Endothelial cell of umbilical vein (primary cell): ENCODE measurements at regions of chr20 and their contacts with region 1.

Region 1: DNA sequence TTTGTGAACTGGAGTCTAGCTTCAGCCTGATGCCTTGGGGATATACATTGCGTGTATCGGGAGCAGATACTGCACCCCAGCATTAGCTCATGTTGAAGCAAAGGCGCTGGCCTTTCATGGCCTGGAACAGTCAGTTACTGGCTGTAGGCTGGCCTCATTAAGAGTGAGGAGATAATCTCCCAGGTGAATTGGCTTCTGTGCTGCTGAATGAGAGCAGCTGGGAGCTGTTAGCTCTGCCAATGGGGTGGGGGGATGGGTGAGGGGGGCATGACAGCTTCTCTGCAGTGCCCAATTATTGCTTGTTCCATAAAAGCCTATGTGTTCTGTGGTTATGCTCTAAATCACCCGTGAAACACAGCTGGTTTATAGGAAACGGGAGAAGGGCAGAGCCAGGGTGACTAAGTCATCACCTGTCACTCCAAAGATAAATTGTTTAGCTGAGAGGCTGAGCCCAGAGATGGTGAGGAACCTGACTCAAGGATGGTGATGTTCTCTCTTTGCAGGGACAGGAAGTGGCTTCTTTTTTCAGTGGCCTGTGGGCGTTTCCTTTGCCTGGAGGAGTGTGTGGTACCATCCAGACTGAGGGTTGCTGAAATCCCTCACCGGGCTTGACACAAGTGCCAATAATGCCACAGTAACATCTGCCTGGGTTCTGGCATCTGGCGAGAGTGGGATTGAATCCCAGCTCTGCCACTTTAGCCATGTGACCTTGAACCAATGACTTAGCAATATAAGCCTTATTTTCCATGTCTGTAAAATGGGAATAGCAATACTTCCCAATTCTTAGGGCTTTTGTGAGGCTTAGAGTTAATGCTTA is 170.8 kb downstream of the BCAS1 start:
- DNase-seq: peak; percentile 47
- H3K4me3 ChIP-seq: no peak overlapping the region
- H3K27ac ChIP-seq: peak overlapping the region; percentile 97
- H3K4me1 ChIP-seq: peaks cover 50% of the 10 kb centered on the region
- H3K27me3 ChIP-seq: no peaks in the 10 kb centered on the region
- CTCF ChIP-seq: no peak
- POLR2A ChIP-seq: no peak

Region 2: DNA sequence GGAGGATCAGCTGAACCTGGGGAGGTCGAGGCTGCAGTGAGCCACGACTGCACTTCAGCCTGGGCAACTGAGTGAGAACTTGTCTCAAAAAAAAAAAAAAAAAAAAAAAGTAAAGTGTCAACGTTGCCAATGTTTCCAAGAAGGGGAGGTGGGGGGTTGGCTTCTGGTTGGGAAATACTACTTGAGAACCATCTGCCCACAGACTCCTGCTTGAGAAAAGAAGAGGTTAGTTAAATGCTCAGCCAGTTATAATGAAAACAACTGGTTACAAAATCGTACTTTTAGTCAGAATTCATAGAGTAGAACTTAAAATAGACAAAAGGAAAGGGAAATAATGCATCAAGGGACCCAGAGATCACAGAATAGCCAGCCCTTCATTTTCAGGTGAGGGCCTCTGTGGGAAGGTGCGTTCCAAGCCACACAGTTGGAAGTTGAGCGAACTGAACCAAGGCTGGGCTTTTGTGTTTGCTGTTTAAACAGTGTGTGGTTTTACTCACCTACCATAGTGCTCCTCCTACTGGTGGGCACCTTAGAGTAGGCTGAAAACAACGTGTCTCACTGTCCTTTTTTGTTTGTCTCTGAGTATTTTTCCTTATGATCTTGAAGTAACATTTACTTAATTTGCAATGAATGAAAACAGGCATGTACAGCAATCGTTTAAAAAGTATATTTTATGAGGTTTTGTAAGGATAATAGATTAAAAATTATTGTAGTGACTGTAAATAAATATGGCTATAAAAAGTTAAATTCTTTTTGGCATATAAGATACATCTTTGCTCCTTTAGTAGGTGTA is 29.9 kb before region 1 on chr20:
- CTCF ChIA-PET with region 1: interaction called, 8 read pairs
- POLR2A ChIA-PET with region 1: no interaction called
- dilution Hi-C with region 1: no loop called
- intact Hi-C with region 1: loop called (anchors 2 kb)
- DNase-seq: peak; percentile 82
- H3K4me3 ChIP-seq: no peak overlapping the region
- H3K27ac ChIP-seq: no peak overlapping the region
- H3K4me1 ChIP-seq: peaks cover 22% of the 10 kb centered on the region
- H3K27me3 ChIP-seq: no peaks in the 10 kb centered on the region
- CTCF ChIP-seq: peak; percentile 74 to 77
- POLR2A ChIP-seq: no peak

Region 3: DNA sequence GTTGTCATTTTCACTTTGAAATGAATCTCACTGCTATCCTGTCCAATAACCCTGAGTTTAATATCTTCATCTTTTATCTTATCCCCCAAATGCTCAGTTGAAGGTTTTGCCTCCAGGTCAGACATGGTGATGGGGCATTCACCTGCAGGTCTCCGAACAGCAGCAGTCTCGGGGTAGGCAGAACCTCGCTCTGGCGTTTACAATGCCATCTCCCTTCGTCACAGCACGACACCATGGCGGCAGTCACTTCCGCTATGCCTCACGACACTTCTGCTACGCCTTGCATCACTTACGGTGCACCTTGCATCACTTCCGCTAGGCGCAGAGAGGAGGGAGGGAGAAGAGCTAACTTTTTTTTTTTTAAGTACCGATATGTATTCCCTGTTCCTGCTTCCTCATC is 24.1 kb before region 1 on chr20:
- CTCF ChIA-PET with region 1: interaction called, 10 read pairs
- POLR2A ChIA-PET with region 1: no interaction called
- dilution Hi-C with region 1: no loop called
- intact Hi-C with region 1: loop called (anchors 2 kb)
- DNase-seq: no peak
- H3K4me3 ChIP-seq: no peak overlapping the region
- H3K27ac ChIP-seq: no peak overlapping the region
- H3K4me1 ChIP-seq: peaks cover 14% of the 10 kb centered on the region
- H3K27me3 ChIP-seq: no peaks in the 10 kb centered on the region
- CTCF ChIP-seq: no peak
- POLR2A ChIP-seq: no peak

Region 4: DNA sequence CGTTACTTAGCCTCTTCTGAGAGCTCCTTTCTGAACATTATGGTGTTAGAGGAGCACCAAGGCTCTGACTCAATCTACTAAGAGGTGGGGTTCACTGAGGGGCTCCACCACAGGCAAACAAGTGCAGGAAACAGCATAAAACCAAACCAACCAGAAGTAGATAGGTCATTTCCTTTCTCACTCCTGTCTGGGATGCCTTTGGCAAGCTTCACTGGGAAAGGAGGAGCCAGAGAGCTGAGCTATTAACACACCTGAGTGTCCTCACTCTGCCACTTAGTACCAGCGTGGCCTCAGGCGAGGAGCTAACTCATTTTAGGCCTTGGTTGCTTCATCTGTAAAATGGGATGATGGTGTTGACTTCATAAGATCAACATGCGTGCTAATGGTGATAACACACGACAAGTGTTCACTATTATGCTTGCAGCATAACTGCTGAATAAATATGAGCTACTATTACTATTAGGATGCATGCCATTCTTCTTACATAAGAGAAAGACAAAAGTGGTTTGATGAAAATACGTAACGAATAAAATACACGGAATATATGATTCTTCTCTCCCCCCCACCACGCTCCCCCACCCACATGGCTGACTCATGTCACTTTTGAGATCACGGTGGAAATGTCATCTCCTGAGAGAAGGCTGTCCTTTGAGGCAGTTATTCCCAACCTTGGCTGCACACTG is 14.6 kb before region 1 on chr20:
- CTCF ChIA-PET with region 1: interaction called, 10 read pairs
- POLR2A ChIA-PET with region 1: no interaction called
- dilution Hi-C with region 1: no loop called
- intact Hi-C with region 1: loop called (anchors 1 kb)
- DNase-seq: no peak
- H3K4me3 ChIP-seq: no peak overlapping the region
- H3K27ac ChIP-seq: no peak overlapping the region
- H3K4me1 ChIP-seq: peaks cover 8% of the 10 kb centered on the region
- H3K27me3 ChIP-seq: no peaks in the 10 kb centered on the region
- CTCF ChIP-seq: no peak
- POLR2A ChIP-seq: no peak

Region 5: GRCh38 chr20:53926428-53927028 is 27.0 kb after region 1 on chr20:
- CTCF ChIA-PET with region 1: interaction called, 3 read pairs
- POLR2A ChIA-PET with region 1: interaction called, 5 read pairs
- dilution Hi-C with region 1: no loop called
- intact Hi-C with region 1: loop called (anchors 1 kb)
- DNase-seq: peak; percentile 96
- H3K4me3 ChIP-seq: no peak overlapping the region
- H3K27ac ChIP-seq: peak overlapping the region; percentile 77
- H3K4me1 ChIP-seq: peaks cover 13% of the 10 kb centered on the region
- H3K27me3 ChIP-seq: no peaks in the 10 kb centered on the region
- CTCF ChIP-seq: no peak
- POLR2A ChIP-seq: peak; percentile 38

Region 6: GRCh38 chr20:53934421-53935343 is 35.1 kb after region 1 on chr20:
- CTCF ChIA-PET with region 1: interaction called, 35 read pairs
- POLR2A ChIA-PET with region 1: interaction called, 4 read pairs
- dilution Hi-C with region 1: no loop called
- intact Hi-C with region 1: no loop called
- DNase-seq: peak; percentile 93
- H3K4me3 ChIP-seq: no peak overlapping the region
- H3K27ac ChIP-seq: peak overlapping the region; percentile 78
- H3K4me1 ChIP-seq: peaks cover 25% of the 10 kb centered on the region
- H3K27me3 ChIP-seq: no peaks in the 10 kb centered on the region
- CTCF ChIP-seq: no peak
- POLR2A ChIP-seq: no peak

Region 7: DNA sequence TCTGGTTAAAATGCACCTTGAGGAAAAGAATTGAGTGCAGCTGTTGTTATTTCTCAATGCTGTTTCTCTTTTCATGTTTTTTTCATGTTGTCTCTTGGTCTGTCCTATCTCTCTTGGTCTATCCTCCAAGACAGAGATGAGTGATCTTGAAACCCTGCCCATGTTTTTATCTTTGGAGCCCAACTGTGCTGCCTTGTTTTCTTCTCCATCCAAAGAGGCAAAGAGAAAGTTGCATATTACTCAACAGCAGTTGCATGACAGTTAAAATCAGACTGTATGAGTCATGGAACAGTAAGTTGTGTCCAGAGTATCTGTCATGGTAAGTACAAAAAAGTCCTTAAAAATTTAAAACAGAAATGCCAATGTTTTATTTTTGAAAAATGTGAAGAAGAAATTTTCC is 144.6 kb after region 1 on chr20:
- CTCF ChIA-PET with region 1: no interaction called
- POLR2A ChIA-PET with region 1: no interaction called
- dilution Hi-C with region 1: no loop called
- intact Hi-C with region 1: no loop called
- DNase-seq: no peak
- H3K4me3 ChIP-seq: no peak overlapping the region
- H3K27ac ChIP-seq: no peak overlapping the region
- H3K4me1 ChIP-seq: no peaks in the 10 kb centered on the region
- H3K27me3 ChIP-seq: peaks cover 0 to 3% of the 10 kb centered on the region in 2 experiments
- CTCF ChIP-seq: no peak
- POLR2A ChIP-seq: no peak